CD4-positive, alpha-beta T cell (primary cell): ENCODE measurements at regions of chr1 and their contacts with region 1.

Region 1: DNA sequence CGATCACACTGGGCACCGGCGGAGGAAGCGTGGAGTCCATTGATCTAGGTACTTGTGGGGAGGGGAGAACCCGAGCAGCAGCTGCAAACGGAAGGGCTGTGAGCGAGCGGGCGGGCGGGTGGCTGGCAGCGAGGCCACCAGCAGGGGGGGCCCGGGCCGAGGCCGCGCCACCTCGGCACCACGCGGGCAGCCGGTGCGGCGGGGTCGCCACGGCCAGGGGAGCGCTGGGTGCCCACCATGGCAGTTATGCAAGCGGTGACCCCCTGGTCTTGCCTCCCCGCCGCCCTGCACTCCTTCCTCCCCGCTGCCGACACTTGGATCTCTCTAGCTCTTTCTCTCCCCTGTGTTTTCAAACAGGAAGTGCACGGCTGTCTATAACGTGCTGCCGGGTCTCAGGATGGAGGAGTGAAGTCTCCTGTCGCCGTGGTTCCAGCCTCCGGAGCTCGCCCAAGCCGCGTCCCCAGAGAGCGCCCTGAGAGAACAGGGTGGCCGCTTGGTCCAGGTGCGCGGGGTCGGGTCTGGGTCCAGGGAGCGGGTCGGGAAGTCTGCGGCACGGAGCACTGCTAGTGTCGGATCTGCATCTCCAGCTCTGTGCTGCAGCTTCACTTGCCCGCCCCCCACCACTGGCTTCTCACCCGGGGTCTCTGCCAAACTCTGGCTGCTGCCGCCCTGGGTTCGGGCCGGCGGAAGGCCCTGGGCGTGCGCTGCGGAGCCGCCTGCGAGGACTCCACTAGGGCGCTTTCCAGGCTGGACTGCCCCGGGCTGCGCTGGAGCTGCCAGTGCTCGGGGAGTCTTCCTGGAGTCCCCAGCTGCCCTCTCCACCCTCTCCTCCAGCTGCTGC is 22.7 kb downstream of the LRRC8D start:
- DNase-seq: peak; percentile 65 to 91 (median 72)
- ATAC-seq: peak; percentile 74
- H3K4me3 ChIP-seq: peak overlapping the region; percentile 75
- H3K4me3 Mint-ChIP-seq: peak overlapping the region; percentile 95
- H3K27ac ChIP-seq: peak overlapping the region; percentile 81 to 90
- H3K27ac Mint-ChIP-seq: peak overlapping the region; percentile 95
- H3K4me1 ChIP-seq: peaks cover 36% of the 10 kb centered on the region
- H3K4me1 Mint-ChIP-seq: peaks cover 54% of the 10 kb centered on the region
- H3K27me3 ChIP-seq: no peaks in the 10 kb centered on the region
- H3K27me3 Mint-ChIP-seq: no peaks in the 10 kb centered on the region
- CTCF ChIP-seq: peak; percentile 60

Region 2: GRCh38 chr1:89804642-89805237 is 38.8 kb before region 1 on chr1:
- CTCF ChIA-PET with region 1: interaction called, 20 read pairs
- POLR2A ChIA-PET with region 1: interaction called, 6 read pairs
- intact Hi-C with region 1: loop called (anchors 2 to 5 kb)
- DNase-seq: peak; percentile 71 to 94 (median 84)
- ATAC-seq: peak; percentile 100
- H3K4me3 ChIP-seq: no peak overlapping the region
- H3K4me3 Mint-ChIP-seq: no peak overlapping the region
- H3K27ac ChIP-seq: no peak overlapping the region
- H3K27ac Mint-ChIP-seq: no peak overlapping the region
- H3K4me1 ChIP-seq: peaks cover 3% of the 10 kb centered on the region
- H3K4me1 Mint-ChIP-seq: no peaks in the 10 kb centered on the region
- H3K27me3 ChIP-seq: no peaks in the 10 kb centered on the region
- H3K27me3 Mint-ChIP-seq: no peaks in the 10 kb centered on the region
- CTCF ChIP-seq: peak; percentile 98

Region 3: GRCh38 chr1:89826594-89826993 is 16.9 kb before region 1 on chr1:
- CTCF ChIA-PET with region 1: interaction called, 11 read pairs
- POLR2A ChIA-PET with region 1: interaction called, 60 read pairs
- intact Hi-C with region 1: loop called in 1 of 2 experiments (anchors 2 kb)
- DNase-seq: no peak
- ATAC-seq: no peak
- H3K4me3 ChIP-seq: no peak overlapping the region
- H3K4me3 Mint-ChIP-seq: no peak overlapping the region
- H3K27ac ChIP-seq: no peak overlapping the region
- H3K27ac Mint-ChIP-seq: no peak overlapping the region
- H3K4me1 ChIP-seq: peaks cover 7% of the 10 kb centered on the region
- H3K4me1 Mint-ChIP-seq: peaks cover 27% of the 10 kb centered on the region
- H3K27me3 ChIP-seq: no peaks in the 10 kb centered on the region
- H3K27me3 Mint-ChIP-seq: no peaks in the 10 kb centered on the region
- CTCF ChIP-seq: no peak

Region 4: GRCh38 chr1:89865498-89866385 is 22.2 kb after region 1 on chr1:
- CTCF ChIA-PET with region 1: interaction called, 21 read pairs
- POLR2A ChIA-PET with region 1: interaction called, 59 read pairs
- intact Hi-C with region 1: no loop called
- DNase-seq: no peak
- ATAC-seq: peak; percentile 20
- H3K4me3 ChIP-seq: no peak overlapping the region
- H3K4me3 Mint-ChIP-seq: no peak overlapping the region
- H3K27ac ChIP-seq: no peak overlapping the region
- H3K27ac Mint-ChIP-seq: peak overlapping the region; percentile 57
- H3K4me1 ChIP-seq: peaks cover 15% of the 10 kb centered on the region
- H3K4me1 Mint-ChIP-seq: peaks cover 88% of the 10 kb centered on the region
- H3K27me3 ChIP-seq: no peaks in the 10 kb centered on the region
- H3K27me3 Mint-ChIP-seq: no peaks in the 10 kb centered on the region
- CTCF ChIP-seq: no peak

Region 5: DNA sequence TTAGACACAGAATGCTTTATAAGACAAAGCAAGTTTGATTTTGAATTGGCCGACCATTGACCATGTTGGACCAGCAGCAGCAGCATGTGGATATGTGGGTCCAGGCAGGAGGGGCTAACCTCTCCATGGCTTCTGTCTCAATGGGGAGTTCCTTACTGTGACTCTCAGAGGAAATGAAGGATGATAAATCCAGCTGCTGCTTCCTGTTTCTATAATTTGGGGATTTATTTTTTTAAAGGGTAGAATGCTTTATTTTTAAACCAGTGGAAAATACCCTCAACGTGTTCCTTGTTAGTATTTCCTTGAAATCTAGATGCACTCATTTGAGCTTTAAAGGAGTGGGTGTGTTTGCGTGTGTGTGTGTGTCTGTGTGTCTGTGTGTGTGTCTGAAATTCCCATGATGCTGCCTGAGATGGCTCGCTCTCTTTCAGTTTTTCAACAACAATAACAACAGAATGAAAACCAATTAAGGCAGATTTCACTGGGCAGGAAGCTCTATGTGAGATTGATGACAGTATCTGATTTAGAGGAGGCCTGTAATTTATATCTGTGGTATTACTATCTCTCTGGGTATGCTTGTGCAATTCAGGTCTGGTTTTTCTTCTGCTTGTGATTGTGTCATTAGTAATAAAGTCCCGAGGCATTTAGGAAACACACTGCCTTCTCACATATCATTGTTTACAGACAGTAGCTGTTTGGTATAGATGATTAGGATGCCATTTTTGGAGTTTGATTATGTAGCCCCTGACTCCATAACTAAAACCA is 65.4 kb after region 1 on chr1:
- CTCF ChIA-PET with region 1: interaction called, 4 read pairs
- POLR2A ChIA-PET with region 1: interaction called, 3 read pairs
- intact Hi-C with region 1: loop called in 1 of 2 experiments (anchors 5 kb)
- DNase-seq: peak in 2 of 14 experiments; percentile 43 to 60
- ATAC-seq: no peak
- H3K4me3 ChIP-seq: no peak overlapping the region
- H3K4me3 Mint-ChIP-seq: no peak overlapping the region
- H3K27ac ChIP-seq: no peak overlapping the region
- H3K27ac Mint-ChIP-seq: peak overlapping the region; percentile 48
- H3K4me1 ChIP-seq: peaks cover 9% of the 10 kb centered on the region
- H3K4me1 Mint-ChIP-seq: peaks cover 75% of the 10 kb centered on the region
- H3K27me3 ChIP-seq: no peaks in the 10 kb centered on the region
- H3K27me3 Mint-ChIP-seq: no peaks in the 10 kb centered on the region
- CTCF ChIP-seq: no peak

Region 6: GRCh38 chr1:89987170-89987819 is 143.8 kb after region 1 on chr1:
- CTCF ChIA-PET with region 1: interaction called, 10 read pairs
- POLR2A ChIA-PET with region 1: interaction called, 6 read pairs
- intact Hi-C with region 1: loop called in 1 of 2 experiments (anchors 1 kb)
- DNase-seq: peak in 12 of 14 experiments; percentile 19 to 83 (median 45)
- ATAC-seq: peak; percentile 93
- H3K4me3 ChIP-seq: no peak overlapping the region
- H3K4me3 Mint-ChIP-seq: no peak overlapping the region
- H3K27ac ChIP-seq: no peak overlapping the region
- H3K27ac Mint-ChIP-seq: no peak overlapping the region
- H3K4me1 ChIP-seq: no peaks in the 10 kb centered on the region
- H3K4me1 Mint-ChIP-seq: no peaks in the 10 kb centered on the region
- H3K27me3 ChIP-seq: no peaks in the 10 kb centered on the region
- H3K27me3 Mint-ChIP-seq: no peaks in the 10 kb centered on the region
- CTCF ChIP-seq: peak; percentile 89